Mammary epithelial cell (primary cell): ENCODE measurements at regions of chr10 and their contacts with region 1.

Region 1: DNA sequence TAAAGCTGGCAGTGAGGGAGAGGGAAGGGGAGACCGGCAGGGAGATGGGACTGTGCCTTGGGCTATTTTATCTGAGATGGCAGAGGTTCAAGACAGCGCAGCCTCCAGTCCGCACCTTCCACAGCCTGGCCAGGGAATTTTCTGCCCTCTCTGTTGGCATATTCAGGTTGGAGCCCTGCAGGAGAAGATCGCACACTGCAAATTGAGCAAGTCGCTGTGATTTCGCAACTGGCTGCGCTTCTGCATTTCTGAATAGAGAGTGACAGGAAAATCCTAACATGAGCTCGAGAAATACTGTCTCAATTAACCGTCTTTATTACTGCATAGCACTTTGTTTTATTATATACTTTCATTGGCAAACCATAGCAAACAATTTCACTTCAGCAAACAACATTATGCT is 238.8 kb upstream of the GPR26 start:
- DNase-seq: peak; percentile 48
- H3K4me3 ChIP-seq: no peak overlapping the region
- H3K27ac ChIP-seq: no peak overlapping the region
- H3K4me1 ChIP-seq: no peaks in the 10 kb centered on the region
- H3K27me3 ChIP-seq: peaks cover 8% of the 10 kb centered on the region
- CTCF ChIP-seq: peak in 1 of 2 donors; percentile 31

Region 2: GRCh38 chr10:123236122-123236521 is 191.3 kb before region 1 on chr10:
- CTCF ChIA-PET with region 1: no interaction called
- dilution Hi-C with region 1: no loop called
- in situ Hi-C with region 1: no loop called
- intact Hi-C with region 1: no loop called
- DNase-seq: no peak
- H3K4me3 ChIP-seq: no peak overlapping the region
- H3K27ac ChIP-seq: no peak overlapping the region
- H3K4me1 ChIP-seq: no peaks in the 10 kb centered on the region
- H3K27me3 ChIP-seq: no peaks in the 10 kb centered on the region
- CTCF ChIP-seq: peak in 1 of 2 donors; percentile 16

Region 3: DNA sequence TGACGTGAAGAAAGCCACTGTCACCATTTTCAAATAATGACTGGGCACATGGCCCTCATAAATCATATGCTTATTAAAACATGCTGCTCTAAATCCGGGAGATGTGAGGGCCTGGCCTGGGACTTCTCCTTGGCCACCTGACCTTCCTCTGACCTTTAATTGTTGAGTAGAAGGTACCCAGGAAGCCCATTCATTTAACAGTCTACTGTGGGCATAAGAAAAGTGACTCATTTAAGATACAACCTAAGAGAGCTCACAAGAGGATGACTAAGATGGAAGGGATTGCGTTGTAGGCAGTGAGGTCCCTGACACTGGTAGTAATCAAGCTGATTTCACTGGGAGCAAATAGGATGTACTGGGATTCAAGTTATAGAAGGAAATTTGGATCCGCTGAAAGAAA is 35.4 kb after region 1 on chr10:
- CTCF ChIA-PET with region 1: no interaction called
- dilution Hi-C with region 1: loop called (anchors 5 kb)
- in situ Hi-C with region 1: no loop called
- intact Hi-C with region 1: no loop called
- DNase-seq: no peak
- H3K4me3 ChIP-seq: no peak overlapping the region
- H3K27ac ChIP-seq: no peak overlapping the region
- H3K4me1 ChIP-seq: no peaks in the 10 kb centered on the region
- H3K27me3 ChIP-seq: peaks cover 1% of the 10 kb centered on the region
- CTCF ChIP-seq: no peak